Activated naive CD4-positive, alpha-beta T cell treated with anti-CD3 and anti-CD28 coated beads, Interleukin-2, amount 10 ng/mL, durations not matched to agents 7 days and 5 days (primary cell): ENCODE measurements at regions of chr3 and their contacts with region 1.

Region 1: DNA sequence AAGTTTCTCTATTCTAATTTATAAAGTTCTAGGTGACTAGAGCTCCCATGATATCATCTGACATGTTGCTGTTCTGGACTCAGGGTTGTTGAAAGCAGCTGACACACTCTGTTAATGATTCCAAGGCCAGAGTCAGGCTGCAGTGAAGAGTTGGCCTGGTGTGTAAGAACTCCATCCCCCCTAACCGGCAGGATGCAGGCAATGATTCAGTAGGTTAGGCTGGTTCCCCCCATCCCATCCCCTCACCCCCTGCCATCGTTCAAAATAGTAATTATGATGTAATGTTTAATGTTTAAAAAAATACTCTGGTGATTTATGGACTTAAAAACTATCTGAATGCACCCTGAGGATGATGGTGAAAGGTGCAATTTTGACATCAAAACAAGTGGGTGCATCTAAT is 4.6 kb upstream of the TRIM71 start:
- DNase-seq: no peak
- H3K4me3 Mint-ChIP-seq: no peak overlapping the region
- H3K27ac Mint-ChIP-seq: no peak overlapping the region
- H3K4me1 Mint-ChIP-seq: peaks cover 25% of the 10 kb centered on the region
- H3K27me3 Mint-ChIP-seq: peaks cover 58% of the 10 kb centered on the region

Region 2: DNA sequence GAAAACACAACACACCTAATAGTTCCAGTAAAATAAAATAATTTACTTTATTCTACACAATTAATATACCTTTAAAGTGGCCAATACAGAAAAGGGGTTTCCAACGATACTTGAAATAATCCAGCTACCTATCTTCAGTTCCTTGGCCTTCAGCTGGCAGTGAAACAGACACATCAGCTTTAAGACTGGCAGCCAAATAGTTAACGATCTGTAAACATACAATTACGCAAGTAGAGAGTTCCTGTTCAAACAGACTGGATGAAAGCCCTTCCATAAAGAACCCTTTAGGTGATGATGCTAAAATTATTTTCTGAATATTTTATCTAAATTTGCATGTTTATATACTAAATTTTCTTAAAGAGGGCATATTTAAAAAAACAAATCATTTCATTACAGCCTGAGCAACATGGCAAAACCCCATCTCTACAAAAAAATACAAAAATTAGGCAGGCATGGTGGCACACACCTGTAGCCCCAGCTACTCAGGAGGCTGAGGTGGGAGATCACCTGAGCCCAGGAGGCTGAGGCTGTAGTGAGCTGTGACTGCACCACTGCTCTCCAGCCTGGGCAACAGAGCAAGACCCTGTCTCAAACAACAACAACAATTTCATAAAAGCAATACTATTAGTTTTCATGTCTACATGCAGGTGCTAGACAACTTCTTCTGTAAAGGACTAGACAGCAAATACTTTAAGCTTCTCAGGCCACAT is 255.4 kb before region 1 on chr3:
- CTCF ChIA-PET with region 1: no interaction called
- DNase-seq: no peak
- H3K4me3 Mint-ChIP-seq: no peak overlapping the region
- H3K27ac Mint-ChIP-seq: no peak overlapping the region
- H3K4me1 Mint-ChIP-seq: peaks cover 13% of the 10 kb centered on the region
- H3K27me3 Mint-ChIP-seq: no peaks in the 10 kb centered on the region

Region 3: GRCh38 chr3:32825601-32826375 is 12.6 kb after region 1 on chr3:
- CTCF ChIA-PET with region 1: no interaction called
- DNase-seq: no peak
- H3K4me3 Mint-ChIP-seq: no peak overlapping the region
- H3K27ac Mint-ChIP-seq: no peak overlapping the region
- H3K4me1 Mint-ChIP-seq: no peaks in the 10 kb centered on the region
- H3K27me3 Mint-ChIP-seq: peaks cover 47% of the 10 kb centered on the region

Region 4: DNA sequence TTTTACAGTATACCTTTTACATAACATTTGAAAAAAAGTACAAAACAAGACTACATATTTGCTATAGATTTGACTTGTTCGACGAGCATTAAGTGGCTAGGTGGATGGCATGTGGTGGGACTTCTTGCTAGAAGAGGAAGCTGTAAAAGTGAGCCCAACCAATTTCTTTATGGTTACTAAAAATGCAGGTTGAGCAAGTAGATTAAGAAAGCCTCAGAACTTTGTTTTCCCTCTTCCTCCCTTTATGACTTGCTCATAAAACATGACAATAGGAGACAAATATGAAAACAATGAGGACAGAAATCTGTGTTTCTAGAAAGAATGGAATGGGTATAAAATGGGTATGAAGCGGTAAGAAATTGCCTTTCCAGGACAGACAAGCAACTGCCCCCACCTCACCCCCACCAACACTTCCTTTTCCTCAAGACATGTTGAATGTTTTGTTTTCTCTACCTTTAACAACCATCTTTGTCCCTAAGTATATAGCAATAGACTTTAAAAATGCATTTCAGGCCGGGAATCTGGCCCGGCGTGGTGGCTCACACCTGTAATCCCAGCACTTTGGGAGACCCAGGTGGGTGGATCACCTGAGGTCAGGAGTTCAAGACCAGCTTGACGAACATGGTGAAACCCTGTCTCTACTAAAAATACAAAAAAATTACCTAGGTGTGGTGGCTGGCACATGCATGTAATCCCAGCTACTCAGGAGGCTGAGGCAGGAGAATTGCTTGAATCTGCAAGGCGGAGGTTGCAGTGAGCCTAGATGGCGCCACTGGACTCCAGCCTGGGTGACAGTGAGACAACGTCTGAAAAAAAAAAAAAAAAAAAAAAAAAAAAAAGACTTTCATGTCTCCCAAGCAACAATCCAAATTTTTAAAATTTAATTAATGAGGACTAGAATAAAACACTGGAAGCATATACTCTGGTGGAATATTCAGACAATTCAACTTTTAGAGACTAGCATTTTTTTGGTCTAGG is 88.5 kb after region 1 on chr3:
- CTCF ChIA-PET with region 1: interaction called, 11 read pairs
- DNase-seq: peak; percentile 63
- H3K4me3 Mint-ChIP-seq: peak overlapping the region; percentile 25
- H3K27ac Mint-ChIP-seq: no peak overlapping the region
- H3K4me1 Mint-ChIP-seq: peaks cover 5% of the 10 kb centered on the region
- H3K27me3 Mint-ChIP-seq: peaks cover 43% of the 10 kb centered on the region